Activated CD4-positive, alpha-beta memory T cell treated with anti-CD3 and anti-CD28 coated beads for 36 hours (primary cell): ENCODE measurements at regions of chr11 and their contacts with region 1.

Region 1: DNA sequence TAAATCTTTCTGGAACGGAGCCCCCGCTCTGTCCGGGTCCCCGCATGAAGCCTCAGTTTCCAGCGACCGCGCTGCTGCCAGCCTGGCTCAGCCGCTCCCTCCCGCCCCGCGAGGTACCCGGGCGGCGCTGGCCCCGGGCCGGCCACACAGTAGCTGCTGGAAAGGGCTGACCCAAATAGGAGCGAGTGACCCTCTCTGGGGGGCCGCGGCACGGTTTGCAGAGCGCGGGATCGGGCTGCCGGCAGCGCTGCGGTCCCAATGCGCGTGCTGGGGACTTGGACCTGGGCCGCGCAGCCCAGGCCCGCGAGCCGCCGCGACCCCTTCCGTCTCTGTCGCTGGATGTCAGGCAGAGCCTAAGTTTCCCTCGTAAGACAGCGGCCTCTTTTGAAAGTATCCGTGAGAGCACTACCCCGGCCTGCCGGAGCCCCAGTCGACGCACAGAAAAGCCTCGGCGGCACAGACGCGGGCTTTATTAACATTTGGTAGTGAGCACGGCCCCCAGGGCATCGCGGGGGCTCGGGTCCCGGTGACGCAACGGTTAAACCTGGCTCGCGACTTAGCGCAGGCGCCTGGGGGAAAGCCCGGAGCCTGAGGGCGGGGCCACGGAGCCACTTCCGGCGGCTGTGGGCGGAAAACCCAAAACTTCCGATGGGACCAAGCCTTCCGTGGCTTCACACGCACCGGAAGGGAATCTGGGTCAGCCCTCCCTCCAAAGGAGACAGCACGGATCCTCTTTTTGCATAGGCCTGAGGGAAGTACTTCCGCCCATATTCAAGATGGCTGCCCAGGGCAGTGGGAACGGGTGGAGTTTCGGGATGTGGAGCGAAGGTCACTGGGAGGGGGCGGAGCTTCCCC is 14.9 kb downstream of the BAD start:
- DNase-seq: peak; percentile 99
- H3K4me3 Mint-ChIP-seq: peak overlapping the region; percentile 89
- H3K27ac Mint-ChIP-seq: peak overlapping the region; percentile 95
- H3K4me1 Mint-ChIP-seq: peaks cover 15% of the 10 kb centered on the region
- H3K27me3 Mint-ChIP-seq: no peaks in the 10 kb centered on the region

Region 2: GRCh38 chr11:64246871-64247728 is 22.5 kb before region 1 on chr11 and contains the start of gene PPP1R14B:
- CTCF ChIA-PET with region 1: interaction called, 16 read pairs
- POLR2A ChIA-PET with region 1: interaction called, 22 read pairs
- intact Hi-C with region 1: loop called (anchors 1 kb)
- DNase-seq: peak; percentile 88
- H3K4me3 Mint-ChIP-seq: peak within 1 kb of the TSS; percentile 91
- H3K27ac Mint-ChIP-seq: peak within 1 kb of the TSS; percentile 90
- H3K4me1 Mint-ChIP-seq: peaks cover 36% of the 10 kb centered on the region
- H3K27me3 Mint-ChIP-seq: no peaks in the 10 kb centered on the region
- total RNA-seq, gene PPP1R14B: 238 to 242 TPM

Region 3: GRCh38 chr11:64284048-64284961 is 14.7 kb after region 1 on chr11 and contains the start of gene BAD:
- CTCF ChIA-PET with region 1: interaction called, 9 read pairs
- POLR2A ChIA-PET with region 1: interaction called, 33 read pairs
- intact Hi-C with region 1: loop called (anchors 1 kb)
- DNase-seq: peak; percentile 96
- H3K4me3 Mint-ChIP-seq: peak within 1 kb of the TSS; percentile 83
- H3K27ac Mint-ChIP-seq: peak within 1 kb of the TSS; percentile 91
- H3K4me1 Mint-ChIP-seq: peaks cover 14% of the 10 kb centered on the region
- H3K27me3 Mint-ChIP-seq: no peaks in the 10 kb centered on the region
- total RNA-seq, gene BAD: 23.7 to 24.2 TPM